ENCODE measurements at regions of chr5 and their contacts with region 1.

Region 1: GRCh38 chr5:176361437-176362232 is at the start of gene KIAA1191:
- DNase-seq: peak; percentile 97
- H3K4me3 Mint-ChIP-seq: peak within 1 kb of the TSS; percentile 99
- H3K27ac Mint-ChIP-seq: peak within 1 kb of the TSS; percentile 90
- H3K4me1 Mint-ChIP-seq: peaks cover 38% of the 10 kb centered on the region
- H3K27me3 Mint-ChIP-seq: no peaks in the 10 kb centered on the region
- total RNA-seq, gene KIAA1191: 35.3 to 40.3 TPM

Region 2: GRCh38 chr5:176388444-176389134 is 27.0 kb after region 1 on chr5 and contains the starts of genes HIGD2A and NOP16:
- CTCF ChIA-PET with region 1: no interaction called
- POLR2A ChIA-PET with region 1: interaction called, 3 read pairs
- intact Hi-C with region 1: loop called (anchors 1 kb)
- DNase-seq: peak; percentile 100
- H3K4me3 Mint-ChIP-seq: peak within 1 kb of the TSS; percentile 99
- H3K27ac Mint-ChIP-seq: peak within 1 kb of the TSS; percentile 98
- H3K4me1 Mint-ChIP-seq: peaks cover 27% of the 10 kb centered on the region
- H3K27me3 Mint-ChIP-seq: no peaks in the 10 kb centered on the region
- total RNA-seq, gene HIGD2A: 112 to 119 TPM
- total RNA-seq, gene NOP16: 52.5 to 57.6 TPM

Region 3: DNA sequence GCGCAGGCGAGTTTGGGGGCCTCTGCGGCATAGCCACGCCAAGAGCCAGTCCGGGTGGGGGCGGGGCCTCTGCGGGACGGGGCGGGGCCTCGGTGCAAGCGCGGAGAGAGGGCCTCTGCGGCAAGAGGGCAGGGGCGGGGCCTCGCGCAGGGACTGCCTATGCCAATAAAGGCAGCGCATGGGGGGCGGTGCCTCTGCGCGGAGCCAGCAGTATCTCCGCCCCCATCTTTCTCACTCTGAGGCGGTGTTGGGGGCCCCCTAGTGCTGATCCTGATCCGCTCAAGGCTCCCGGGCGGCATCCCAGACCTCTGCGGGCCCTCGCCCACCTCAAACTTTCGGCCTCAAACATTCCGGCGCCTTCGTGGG is 257.6 kb after region 1 on chr5:
- CTCF ChIA-PET with region 1: no interaction called
- POLR2A ChIA-PET with region 1: no interaction called
- intact Hi-C with region 1: no loop called
- DNase-seq: peak; percentile 91
- H3K4me3 Mint-ChIP-seq: no peak overlapping the region
- H3K27ac Mint-ChIP-seq: no peak overlapping the region
- H3K4me1 Mint-ChIP-seq: peaks cover 16% of the 10 kb centered on the region
- H3K27me3 Mint-ChIP-seq: peaks cover 59% of the 10 kb centered on the region